ENCODE measurements at regions of chr17 and their contacts with region 1.

Region 1: GRCh38 chr17:57892146-57892828 is 42.4 kb upstream of the MRPS23 start:
- DNase-seq: peak; percentile 97
- ATAC-seq: peak; percentile 43
- H3K4me3 ChIP-seq: no peak overlapping the region
- H3K27ac ChIP-seq: peak overlapping the region; percentile 93
- H3K4me1 ChIP-seq: peaks cover 61% of the 10 kb centered on the region
- H3K27me3 ChIP-seq: no peaks in the 10 kb centered on the region
- CTCF ChIP-seq: peak; percentile 99

Region 2: GRCh38 chr17:57810721-57811637 is 81.3 kb before region 1 on chr17:
- CTCF ChIA-PET with region 1: no interaction called
- POLR2A ChIA-PET with region 1: no interaction called
- intact Hi-C with region 1: no loop called
- DNase-seq: no peak
- ATAC-seq: no peak
- H3K4me3 ChIP-seq: no peak overlapping the region
- H3K27ac ChIP-seq: no peak overlapping the region
- H3K4me1 ChIP-seq: no peaks in the 10 kb centered on the region
- H3K27me3 ChIP-seq: peaks cover 59% of the 10 kb centered on the region
- CTCF ChIP-seq: no peak

Region 3: DNA sequence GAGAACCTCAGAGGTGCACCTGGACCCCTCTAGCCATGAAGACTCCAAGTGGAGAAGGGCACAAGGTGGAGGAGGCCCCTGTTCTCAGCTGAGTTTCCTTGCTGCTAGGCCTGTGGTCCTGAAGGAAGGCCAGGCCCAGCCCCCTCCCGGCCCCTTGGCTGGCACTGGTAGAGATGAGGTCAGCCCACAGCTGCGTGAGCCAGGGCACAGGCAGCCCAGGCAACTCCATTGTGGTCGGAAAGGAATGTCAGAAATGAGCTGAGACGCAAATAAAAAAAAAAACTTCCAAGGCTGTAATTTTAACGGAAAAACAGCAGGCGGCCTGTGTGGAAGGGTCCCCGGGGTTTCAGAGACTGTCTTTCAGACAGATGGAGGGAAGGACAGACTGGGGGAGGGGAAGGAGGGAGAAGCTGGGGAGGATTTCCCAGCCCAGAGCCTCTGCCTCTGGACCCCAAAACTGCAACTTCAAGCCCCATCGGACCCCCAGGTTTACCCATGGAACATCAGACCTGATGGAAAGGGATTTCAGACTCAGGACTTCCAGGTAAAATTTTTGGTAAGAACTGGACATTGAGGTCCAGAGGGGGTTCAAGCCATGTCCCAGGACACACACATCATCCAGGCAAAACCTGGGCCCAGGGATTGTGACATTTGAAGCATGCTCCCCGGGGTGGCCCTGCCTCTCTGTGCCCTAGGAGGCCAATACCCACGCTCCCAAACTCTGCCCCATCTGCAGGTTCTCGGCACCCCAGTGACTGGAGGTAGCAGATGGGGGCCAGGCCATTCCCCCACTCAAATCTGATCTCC is 16.8 kb before region 1 on chr17:
- CTCF ChIA-PET with region 1: interaction called, 4 read pairs
- POLR2A ChIA-PET with region 1: no interaction called
- intact Hi-C with region 1: loop called (anchors 1 kb)
- DNase-seq: peak; percentile 99
- ATAC-seq: peak; percentile 80
- H3K4me3 ChIP-seq: peak overlapping the region; percentile 16; the same call in 1 of the 2 replicates
- H3K27ac ChIP-seq: peak overlapping the region; percentile 65
- H3K4me1 ChIP-seq: peaks cover 70% of the 10 kb centered on the region
- H3K27me3 ChIP-seq: no peaks in the 10 kb centered on the region
- CTCF ChIP-seq: peak; percentile 80

Region 4: GRCh38 chr17:57916925-57917858 is 24.9 kb after region 1 on chr17:
- CTCF ChIA-PET with region 1: interaction called, 7 read pairs
- POLR2A ChIA-PET with region 1: interaction called, 3 read pairs
- intact Hi-C with region 1: loop called (anchors 2 kb)
- DNase-seq: peak; percentile 39
- ATAC-seq: peak; percentile 7; the same call in 1 of the 2 replicates
- H3K4me3 ChIP-seq: no peak overlapping the region
- H3K27ac ChIP-seq: peak overlapping the region; percentile 86
- H3K4me1 ChIP-seq: peaks cover 52% of the 10 kb centered on the region
- H3K27me3 ChIP-seq: no peaks in the 10 kb centered on the region
- CTCF ChIP-seq: peak; percentile 55; the same call in 1 of the 2 replicates

Region 5: GRCh38 chr17:57939797-57940196 is 47.5 kb after region 1 on chr17:
- CTCF ChIA-PET with region 1: interaction called, 4 read pairs
- POLR2A ChIA-PET with region 1: interaction called, 3 read pairs
- intact Hi-C with region 1: loop called (anchors 1 kb)
- DNase-seq: no peak
- ATAC-seq: no peak
- H3K4me3 ChIP-seq: no peak overlapping the region
- H3K27ac ChIP-seq: peak overlapping the region; percentile 52
- H3K4me1 ChIP-seq: peaks cover 69% of the 10 kb centered on the region
- H3K27me3 ChIP-seq: no peaks in the 10 kb centered on the region
- CTCF ChIP-seq: no peak

Region 6: GRCh38 chr17:57987580-57988421 is 95.5 kb after region 1 on chr17 and contains the start of gene VEZF1:
- CTCF ChIA-PET with region 1: interaction called, 5 read pairs
- POLR2A ChIA-PET with region 1: no interaction called
- intact Hi-C with region 1: loop called (anchors 2 kb)
- DNase-seq: peak; percentile 79
- ATAC-seq: peak; percentile 42
- H3K4me3 ChIP-seq: peak within 1 kb of the TSS; percentile 80
- H3K27ac ChIP-seq: peak within 1 kb of the TSS; percentile 87
- H3K4me1 ChIP-seq: peaks cover 39% of the 10 kb centered on the region
- H3K27me3 ChIP-seq: no peaks in the 10 kb centered on the region
- CTCF ChIP-seq: no peak
- total RNA-seq, gene VEZF1: 70.1 and 78.1 TPM in 2 replicates

Region 7: DNA sequence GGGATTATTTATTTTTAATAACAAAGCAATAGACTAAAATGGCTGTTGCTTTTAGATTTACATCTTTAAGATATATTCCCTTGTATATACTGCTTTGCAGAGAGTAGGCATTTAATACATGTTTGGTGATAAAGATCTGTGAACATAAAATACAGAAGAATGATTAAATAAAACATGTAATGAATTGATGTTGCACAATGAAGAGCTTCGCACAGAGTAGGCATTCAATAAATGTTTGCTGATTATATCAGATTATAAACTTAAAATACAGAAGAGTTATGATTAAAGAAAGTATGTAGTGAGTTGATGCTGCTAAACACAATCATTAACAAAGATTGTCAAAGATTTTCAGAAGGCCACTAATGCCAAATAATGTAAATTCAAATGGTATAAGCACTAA is 571.5 kb after region 1 on chr17:
- CTCF ChIA-PET with region 1: no interaction called
- POLR2A ChIA-PET with region 1: no interaction called
- intact Hi-C with region 1: no loop called
- DNase-seq: no peak
- ATAC-seq: no peak
- H3K4me3 ChIP-seq: no peak overlapping the region
- H3K27ac ChIP-seq: no peak overlapping the region
- H3K4me1 ChIP-seq: no peaks in the 10 kb centered on the region
- H3K27me3 ChIP-seq: peaks cover 57% of the 10 kb centered on the region
- CTCF ChIP-seq: no peak